GM13977 (cell line): ENCODE measurements at regions of chr10 and their contacts with region 1.

Region 1: DNA sequence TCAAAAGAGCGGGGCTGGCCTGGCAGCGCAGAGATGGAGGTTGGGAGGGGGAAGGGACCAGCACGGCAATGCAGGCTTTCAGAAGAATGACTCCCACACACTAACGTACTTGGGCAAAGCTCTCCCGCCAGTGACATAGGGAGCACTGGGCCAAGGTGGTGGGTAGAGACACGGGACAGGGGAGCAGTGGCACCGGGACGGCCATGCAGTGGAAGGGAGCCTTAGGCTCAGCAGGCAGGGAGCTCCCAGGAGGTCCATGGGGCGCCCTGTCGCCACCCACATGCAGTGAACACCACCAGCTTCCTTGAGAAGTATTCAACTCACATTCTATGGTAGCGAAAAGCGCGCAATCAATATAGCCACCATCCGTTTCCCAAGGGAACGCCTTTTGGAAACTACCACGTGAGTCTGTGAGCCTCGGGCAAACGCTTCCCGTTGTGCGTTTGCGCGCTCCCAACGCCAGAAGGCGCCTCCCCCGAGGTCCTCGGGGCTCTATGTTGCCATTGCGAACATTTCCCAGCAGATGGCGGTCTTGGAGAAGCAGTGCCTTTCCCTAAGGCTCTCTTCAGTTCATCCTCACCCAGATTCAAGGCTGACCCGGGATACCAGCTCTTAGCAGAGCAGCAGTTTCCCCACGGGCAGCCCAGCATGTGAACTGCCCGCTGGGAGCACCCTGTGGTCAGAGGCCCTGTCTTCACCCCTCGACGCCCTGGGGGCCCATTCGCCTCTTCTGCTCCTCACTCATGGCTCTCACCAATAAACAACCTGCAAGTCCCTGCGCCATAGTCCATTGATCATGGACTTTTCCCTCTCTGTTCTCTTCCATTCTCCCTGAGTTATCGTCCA is 16.4 kb upstream of the OPALIN start:
- DNase-seq: peak; percentile 93
- CTCF ChIP-seq: peak; percentile 96

Region 2: DNA sequence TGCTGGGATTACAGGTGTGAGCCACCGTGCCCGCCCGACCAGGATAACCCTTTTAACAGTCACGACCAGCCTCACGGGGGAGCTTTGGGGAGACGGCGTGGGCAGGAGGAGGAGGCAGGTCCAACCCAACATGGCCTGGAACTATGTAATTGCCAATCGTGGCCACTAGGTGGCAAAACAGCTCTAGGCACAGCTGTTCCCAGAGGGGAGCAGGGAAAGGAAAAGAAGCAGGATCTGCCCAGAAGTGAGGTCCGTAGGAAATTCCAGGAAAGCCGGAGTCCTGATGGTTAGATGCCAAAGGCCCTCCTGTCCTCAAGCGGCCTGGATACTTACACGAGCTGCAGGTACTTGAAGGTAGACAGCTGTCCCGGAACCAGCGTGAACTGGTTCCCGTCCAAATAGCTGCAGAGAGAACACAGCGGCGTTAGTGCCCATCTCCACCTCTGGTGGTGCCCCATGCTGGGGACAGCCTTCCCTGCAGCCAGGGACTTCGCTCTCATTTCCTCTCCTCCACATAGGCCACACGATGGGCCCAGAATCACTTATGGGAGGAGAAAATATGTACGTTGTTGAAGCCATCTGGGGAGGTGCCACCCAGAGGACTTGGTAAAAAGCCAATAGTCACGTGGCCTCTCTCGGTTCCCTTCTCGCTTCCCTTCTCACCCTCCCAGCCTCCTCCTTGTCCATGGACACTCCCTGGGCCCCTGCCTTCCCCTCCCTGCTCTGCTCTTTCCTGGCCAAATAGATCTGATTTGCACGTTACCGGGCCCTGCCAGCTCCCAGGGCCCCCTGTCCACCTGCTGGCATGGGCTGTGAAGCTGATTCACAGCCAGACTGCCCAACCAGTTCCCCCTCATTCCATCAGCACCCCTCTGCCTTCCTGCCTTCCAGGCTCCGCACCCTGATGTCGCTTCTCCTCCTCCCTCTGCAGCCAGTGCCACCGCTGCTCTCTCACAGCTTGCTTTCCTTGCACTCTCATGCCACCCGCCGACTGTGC is 662.5 kb after region 1 on chr10:
- in situ Hi-C with region 1: loop called (anchors 25 kb)
- DNase-seq: peak; percentile 84
- CTCF ChIP-seq: peak; percentile 91

Region 3: GRCh38 chr10:97081621-97082235 is 706.5 kb after region 1 on chr10:
- in situ Hi-C with region 1: no loop called
- DNase-seq: peak; percentile 82
- CTCF ChIP-seq: peak; percentile 78